H1 (cell line): ENCODE measurements at regions of chr10 and their contacts with region 1.

Region 1: GRCh38 chr10:48309711-48310226 is 3.3 kb downstream of the MAPK8 start:
- DNase-seq: no peak
- H3K4me3 ChIP-seq: no peak overlapping the region
- H3K27ac ChIP-seq: no peak overlapping the region
- H3K4me1 ChIP-seq: no peaks in the 10 kb centered on the region; a peak in 2 of 7 replicates
- H3K27me3 ChIP-seq: no peaks in the 10 kb centered on the region
- CTCF ChIP-seq: peak in 2 of 3 experiments; percentile 27 to 52; a peak in 2 of 4 replicates
- EP300 ChIP-seq: no peak
- POLR2A ChIP-seq: no peak
- RAD21 ChIP-seq: peak; percentile 35 to 38; a peak in 3 of 4 replicates

Region 2: GRCh38 chr10:48231699-48232315 is 78.0 kb before region 1 on chr10:
- CTCF ChIA-PET with region 1: no interaction called
- POLR2A ChIA-PET with region 1: no interaction called
- DNase-seq: peak in 1 of 2 experiments; percentile 30
- H3K4me3 ChIP-seq: no peak overlapping the region
- H3K27ac ChIP-seq: no peak overlapping the region
- H3K4me1 ChIP-seq: peaks cover 0 to 6% (median 1%) of the 10 kb centered on the region in 4 experiments; a peak in 3 of 7 replicates
- H3K27me3 ChIP-seq: no peaks in the 10 kb centered on the region
- CTCF ChIP-seq: no peak
- EP300 ChIP-seq: no peak
- POLR2A ChIP-seq: no peak
- RAD21 ChIP-seq: no peak

Region 3: GRCh38 chr10:48322017-48322416 is 12.2 kb after region 1 on chr10:
- CTCF ChIA-PET with region 1: interaction called, 27 read pairs
- POLR2A ChIA-PET with region 1: interaction called, 5 read pairs
- DNase-seq: no peak
- H3K4me3 ChIP-seq: no peak overlapping the region
- H3K27ac ChIP-seq: no peak overlapping the region
- H3K4me1 ChIP-seq: peaks cover 0 to 5% (median 2%) of the 10 kb centered on the region in 4 experiments; a peak in 3 of 7 replicates
- H3K27me3 ChIP-seq: no peaks in the 10 kb centered on the region
- CTCF ChIP-seq: no peak
- EP300 ChIP-seq: no peak
- POLR2A ChIP-seq: no peak
- RAD21 ChIP-seq: no peak

Region 4: GRCh38 chr10:48598243-48598935 is 288.6 kb after region 1 on chr10:
- CTCF ChIA-PET with region 1: no interaction called
- POLR2A ChIA-PET with region 1: no interaction called
- DNase-seq: no peak
- H3K4me3 ChIP-seq: no peak overlapping the region
- H3K27ac ChIP-seq: no peak overlapping the region
- H3K4me1 ChIP-seq: peaks cover 2 to 17% (median 8%) of the 10 kb centered on the region in 4 experiments; a peak in 5 of 7 replicates
- H3K27me3 ChIP-seq: peaks cover 0 to under 1% (median 0%) of the 10 kb centered on the region in 4 experiments; a peak in 3 of 7 replicates
- CTCF ChIP-seq: no peak
- EP300 ChIP-seq: no peak
- POLR2A ChIP-seq: no peak
- RAD21 ChIP-seq: no peak